Endothelial cell of umbilical vein (primary cell): ENCODE measurements at regions of chr7 and their contacts with region 1.

Region 1: DNA sequence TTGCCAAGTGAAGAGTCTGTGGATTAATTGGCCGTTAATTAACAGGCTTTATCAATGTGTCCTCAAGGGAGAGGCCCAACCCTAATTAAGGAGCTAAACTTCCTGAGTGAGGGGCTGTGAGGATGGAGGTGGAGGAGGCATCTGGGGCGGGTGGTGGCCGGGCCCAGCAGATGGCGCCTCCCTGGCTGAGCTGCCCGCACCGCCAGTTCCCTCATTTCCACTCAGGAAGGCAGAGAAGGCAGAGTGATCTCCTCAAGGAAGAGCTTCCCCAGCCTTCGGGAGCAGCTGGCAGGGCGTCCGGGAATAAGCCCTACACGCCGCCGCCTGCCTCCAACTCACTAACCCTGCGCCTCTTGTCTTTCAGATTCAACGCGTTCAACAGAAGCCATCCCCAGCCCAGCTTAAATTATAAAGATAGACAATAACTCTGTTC is 112.2 kb downstream of the CYTH3 start:
- DNase-seq: peak; percentile 66
- H3K4me3 ChIP-seq: no peak overlapping the region
- H3K27ac ChIP-seq: no peak overlapping the region
- H3K4me1 ChIP-seq: no peaks in the 10 kb centered on the region
- H3K27me3 ChIP-seq: no peaks in the 10 kb centered on the region
- CTCF ChIP-seq: peak; percentile 65 to 83
- POLR2A ChIP-seq: no peak

Region 2: GRCh38 chr7:6148724-6149360 is 11.4 kb before region 1 on chr7:
- CTCF ChIA-PET with region 1: interaction called, 13 read pairs
- POLR2A ChIA-PET with region 1: no interaction called
- dilution Hi-C with region 1: no loop called
- intact Hi-C with region 1: no loop called
- DNase-seq: no peak
- H3K4me3 ChIP-seq: no peak overlapping the region
- H3K27ac ChIP-seq: no peak overlapping the region
- H3K4me1 ChIP-seq: no peaks in the 10 kb centered on the region
- H3K27me3 ChIP-seq: no peaks in the 10 kb centered on the region
- CTCF ChIP-seq: no peak
- POLR2A ChIP-seq: no peak

Region 3: DNA sequence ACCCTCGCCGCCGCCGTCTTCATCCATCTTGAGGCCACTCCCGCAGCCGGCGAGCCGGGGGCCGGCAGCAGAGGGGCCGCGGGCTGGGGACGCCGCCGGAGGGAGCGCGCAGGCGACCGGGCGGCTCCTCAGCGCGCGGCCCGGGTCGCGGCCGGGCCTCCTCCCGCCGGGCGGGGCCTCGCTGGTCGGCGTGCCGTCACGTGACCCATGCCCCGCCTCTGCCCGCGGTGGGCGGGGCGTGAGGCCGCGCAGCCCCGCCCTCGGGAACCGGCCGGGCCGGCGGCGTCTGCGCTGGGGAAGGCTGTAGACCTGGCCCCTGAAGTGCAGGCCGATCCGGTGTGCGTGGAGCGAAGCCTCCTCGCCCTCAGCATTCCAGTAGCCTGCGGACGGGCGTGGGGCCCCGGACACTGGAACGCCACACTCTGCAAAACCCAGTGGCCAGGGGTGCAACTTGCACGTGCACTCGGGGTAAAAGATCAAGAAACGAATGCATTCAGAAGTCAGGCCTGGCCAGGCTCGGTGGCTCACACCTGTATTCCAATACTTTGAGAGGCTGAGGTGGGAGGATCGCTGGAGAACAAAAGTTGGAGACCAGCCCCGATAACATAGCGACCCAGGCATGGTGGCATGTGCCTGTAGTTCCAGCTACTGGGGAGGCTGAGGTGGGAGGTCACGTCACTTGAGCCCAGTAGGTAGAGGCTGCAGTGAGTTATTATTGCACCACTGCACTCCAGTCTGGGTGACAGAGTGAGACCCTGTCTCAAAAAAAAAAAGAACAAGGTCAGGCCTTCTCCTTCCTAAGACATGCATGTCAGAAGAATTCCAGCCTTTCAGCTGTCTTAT is 112.5 kb after region 1 on chr7 and contains the start of gene CYTH3:
- CTCF ChIA-PET with region 1: interaction called, 24 read pairs
- POLR2A ChIA-PET with region 1: no interaction called
- dilution Hi-C with region 1: no loop called
- intact Hi-C with region 1: loop called (anchors 1 kb)
- DNase-seq: peak; percentile 79
- H3K4me3 ChIP-seq: peak within 1 kb of the TSS; percentile 66 to 87 (median 69)
- H3K27ac ChIP-seq: no peak within 1 kb of the TSS
- H3K4me1 ChIP-seq: peaks cover 9% of the 10 kb centered on the region
- H3K27me3 ChIP-seq: peaks cover 3% of the 10 kb centered on the region in 2 experiments
- CTCF ChIP-seq: no peak
- POLR2A ChIP-seq: peak; percentile 77
- total RNA-seq, gene CYTH3: 11.1 and 11.2 TPM in 2 replicates

Region 4: DNA sequence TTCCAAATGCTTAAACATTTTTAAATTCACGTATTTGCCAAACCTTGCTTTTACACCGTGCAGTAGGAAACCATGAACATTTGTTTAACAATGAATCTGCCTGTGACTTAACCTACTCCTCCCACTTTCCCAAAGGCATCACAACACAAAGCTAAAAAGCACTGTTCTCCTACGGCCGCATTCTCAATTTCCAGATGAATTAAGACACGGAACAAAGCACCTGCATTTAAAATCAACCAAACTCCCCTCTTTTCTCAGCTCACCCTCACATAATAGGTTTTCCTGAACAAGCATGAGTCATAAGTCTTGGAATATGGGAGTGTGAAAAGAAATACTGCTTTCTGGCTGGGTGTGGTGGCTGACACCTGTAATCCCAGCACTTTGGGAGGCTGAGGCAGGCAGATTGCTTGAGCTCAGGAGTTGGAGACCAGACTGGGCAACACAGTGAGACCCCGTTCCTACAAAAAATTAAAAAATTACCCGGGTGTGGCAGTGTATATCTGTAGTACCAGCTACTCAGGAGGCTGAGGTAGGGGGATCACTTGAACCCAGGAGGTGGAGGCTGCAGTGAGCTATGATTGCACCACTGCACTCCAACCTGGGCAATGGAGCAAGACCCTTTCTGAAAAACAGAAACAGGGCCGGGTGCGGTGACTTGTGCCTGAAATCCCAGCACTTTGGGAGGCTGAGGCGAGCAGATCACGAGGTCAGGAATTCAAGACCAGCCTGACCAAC is 163.9 kb after region 1 on chr7:
- CTCF ChIA-PET with region 1: interaction called, 240 read pairs
- POLR2A ChIA-PET with region 1: no interaction called
- dilution Hi-C with region 1: no loop called
- intact Hi-C with region 1: loop called (anchors 1 kb)
- DNase-seq: peak; percentile 6
- H3K4me3 ChIP-seq: no peak overlapping the region
- H3K27ac ChIP-seq: no peak overlapping the region
- H3K4me1 ChIP-seq: no peaks in the 10 kb centered on the region
- H3K27me3 ChIP-seq: no peaks in the 10 kb centered on the region
- CTCF ChIP-seq: no peak
- POLR2A ChIP-seq: no peak

Region 5: DNA sequence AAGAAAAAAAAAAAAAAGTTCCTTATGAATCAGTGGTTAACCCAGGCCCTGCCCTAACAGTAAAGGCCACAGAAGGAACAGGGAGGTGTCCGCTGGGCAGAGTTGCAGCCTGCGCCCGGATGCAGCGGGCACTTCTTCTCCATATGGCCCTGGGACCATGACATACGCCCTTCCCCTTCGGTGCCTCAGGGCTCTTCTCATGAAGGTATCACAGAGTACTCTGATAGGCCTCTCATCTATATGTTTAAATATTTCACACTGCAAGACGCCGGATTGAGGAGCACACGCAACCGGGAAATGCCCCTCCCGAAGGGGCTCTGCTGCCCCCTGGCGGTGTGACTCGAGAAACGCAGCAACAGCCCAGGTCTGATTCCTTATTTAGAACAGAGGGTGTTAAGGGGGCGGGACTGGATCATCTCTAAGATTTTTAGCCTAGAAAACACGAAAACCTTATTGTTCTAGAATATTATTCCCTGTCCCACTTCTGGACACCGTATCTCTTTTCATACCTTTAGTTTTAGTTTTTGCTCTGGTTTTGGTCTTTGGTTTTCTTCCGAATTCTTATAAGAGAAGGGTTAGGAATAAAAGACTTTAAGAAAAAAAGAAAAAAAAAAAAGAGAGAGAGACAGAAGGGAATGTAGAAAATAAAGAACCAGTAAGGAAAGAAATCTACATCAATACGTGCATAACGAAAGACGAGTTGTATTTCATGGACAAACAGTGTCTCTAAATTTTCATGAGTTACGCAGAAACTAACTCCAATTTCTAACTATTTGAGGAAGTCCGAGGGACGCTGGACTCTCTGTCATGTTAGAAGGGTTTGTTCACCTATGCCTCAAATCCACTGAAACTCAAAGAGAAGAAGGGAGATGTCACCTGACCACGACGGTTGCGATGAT is 275.5 kb after region 1 on chr7:
- CTCF ChIA-PET with region 1: interaction called, 6 read pairs
- POLR2A ChIA-PET with region 1: no interaction called
- dilution Hi-C with region 1: no loop called
- intact Hi-C with region 1: loop called (anchors 2 kb)
- DNase-seq: peak; percentile 84
- H3K4me3 ChIP-seq: no peak overlapping the region
- H3K27ac ChIP-seq: no peak overlapping the region
- H3K4me1 ChIP-seq: peaks cover 11% of the 10 kb centered on the region
- H3K27me3 ChIP-seq: no peaks in the 10 kb centered on the region
- CTCF ChIP-seq: peak; percentile 93 to 95
- POLR2A ChIP-seq: no peak